Panc1 (cell line): ENCODE measurements at regions of chr1 and their contacts with region 1.

Region 1: DNA sequence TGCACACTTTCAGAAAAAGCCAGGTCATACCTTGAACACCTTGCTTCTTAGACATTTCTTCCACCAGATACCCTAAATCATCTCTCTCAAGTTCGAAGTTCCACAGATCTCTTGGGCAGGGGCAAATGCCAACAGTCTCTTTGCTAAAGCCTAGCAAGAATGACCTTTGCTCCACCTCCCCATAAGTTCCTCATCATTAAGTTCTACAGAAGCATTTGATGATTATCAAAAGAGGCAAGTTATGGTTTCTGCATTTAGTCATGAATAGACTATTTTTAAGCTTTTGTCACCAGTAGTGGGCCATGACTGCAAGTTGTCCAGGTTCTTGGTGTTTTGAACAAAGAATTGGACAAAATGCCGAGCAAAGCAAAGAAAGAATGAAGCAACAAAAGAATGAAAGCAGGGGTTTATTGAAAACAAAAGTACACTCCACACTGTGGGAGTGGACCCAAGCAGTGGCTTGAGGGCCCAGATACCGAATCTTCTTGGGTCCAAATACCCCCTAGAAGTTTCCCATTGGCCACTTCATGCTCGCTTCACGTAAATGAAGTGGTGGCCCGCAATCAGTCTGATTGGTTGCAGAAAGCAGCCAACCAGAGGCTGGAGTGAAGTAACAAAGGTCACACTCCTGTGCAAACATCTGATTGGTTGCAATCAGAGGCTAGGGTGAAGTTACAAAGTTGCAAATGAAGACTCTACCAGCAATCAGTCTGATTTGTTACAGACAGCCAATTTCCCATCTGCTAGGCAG is 9.8 kb upstream of the EGLN1 start:
- DNase-seq: no peak
- ATAC-seq: no peak
- H3K4me3 ChIP-seq: no peak overlapping the region
- H3K27ac ChIP-seq: no peak overlapping the region
- H3K4me1 ChIP-seq: no peaks in the 10 kb centered on the region
- H3K27me3 ChIP-seq: no peaks in the 10 kb centered on the region
- CTCF ChIP-seq: no peak

Region 2: GRCh38 chr1:231584124-231584523 is 152.3 kb after region 1 on chr1:
- CTCF ChIA-PET with region 1: interaction called, 10 read pairs
- POLR2A ChIA-PET with region 1: no interaction called
- in situ Hi-C with region 1: no loop called
- intact Hi-C with region 1: no loop called
- DNase-seq: peak; percentile 32
- ATAC-seq: peak; percentile 75
- H3K4me3 ChIP-seq: no peak overlapping the region
- H3K27ac ChIP-seq: no peak overlapping the region
- H3K4me1 ChIP-seq: no peaks in the 10 kb centered on the region
- H3K27me3 ChIP-seq: no peaks in the 10 kb centered on the region
- CTCF ChIP-seq: peak; percentile 48; the same call in 1 of the 2 replicates